CD8-positive, alpha-beta T cell (primary cell): ENCODE measurements at regions of chr1 and their contacts with region 1.

Region 1: DNA sequence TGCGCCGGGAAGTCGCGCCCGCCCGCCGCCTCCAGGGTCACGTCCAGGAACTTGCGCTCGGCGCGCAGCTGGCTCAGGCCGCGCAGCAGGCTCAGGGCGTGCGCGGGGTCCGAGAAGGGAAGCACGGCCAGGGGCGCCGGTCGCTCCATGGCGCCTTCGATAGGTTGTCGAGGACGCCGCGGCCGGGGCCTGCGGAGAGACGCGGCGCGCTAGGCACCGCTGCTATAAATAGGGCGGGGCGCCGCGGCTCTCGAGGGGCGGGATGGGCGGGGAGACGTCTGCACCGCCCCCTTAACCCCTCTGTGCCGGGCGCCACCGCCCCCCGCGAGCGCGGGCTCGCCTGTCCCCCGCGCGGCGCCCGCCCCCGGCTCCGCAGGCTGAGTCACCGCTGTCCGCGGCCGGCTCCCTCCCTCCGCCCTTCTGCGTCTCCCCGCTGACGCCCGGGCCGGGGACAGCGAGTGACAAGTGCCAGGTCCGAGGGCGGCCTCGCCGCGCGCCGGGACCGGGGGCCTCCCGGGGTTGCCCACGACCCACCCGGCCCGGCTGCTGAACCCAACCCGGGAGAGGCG is at the start of gene KLHL21:
- DNase-seq: peak; percentile 68 to 94 (median 85)
- ATAC-seq: peak; percentile 56
- H3K4me3 ChIP-seq: peak within 1 kb of the TSS; percentile 87 to 89
- H3K4me3 Mint-ChIP-seq: peak within 1 kb of the TSS; percentile 97
- H3K27ac ChIP-seq: peak within 1 kb of the TSS; percentile 91 to 96
- H3K27ac Mint-ChIP-seq: peak within 1 kb of the TSS; percentile 97
- H3K4me1 ChIP-seq: peaks cover 34% of the 10 kb centered on the region
- H3K4me1 Mint-ChIP-seq: peaks cover 34% of the 10 kb centered on the region
- H3K27me3 ChIP-seq: no peaks in the 10 kb centered on the region
- H3K27me3 Mint-ChIP-seq: no peaks in the 10 kb centered on the region
- CTCF ChIP-seq: no peak
- total RNA-seq, gene KLHL21: 33.3 to 33.4 TPM

Region 2: GRCh38 chr1:5992026-5992813 is 610.5 kb before region 1 on chr1 and contains the start of gene NPHP4:
- CTCF ChIA-PET with region 1: no interaction called
- POLR2A ChIA-PET with region 1: no interaction called
- intact Hi-C with region 1: loop called in 1 of 2 experiments (anchors 5 kb)
- DNase-seq: peak; percentile 98 to 100 (median 99)
- ATAC-seq: peak; percentile 86
- H3K4me3 ChIP-seq: peak within 1 kb of the TSS; percentile 64 to 87
- H3K4me3 Mint-ChIP-seq: peak within 1 kb of the TSS; percentile 96
- H3K27ac ChIP-seq: peak within 1 kb of the TSS; percentile 90 to 99
- H3K27ac Mint-ChIP-seq: peak within 1 kb of the TSS; percentile 93
- H3K4me1 ChIP-seq: peaks cover 35% of the 10 kb centered on the region
- H3K4me1 Mint-ChIP-seq: peaks cover 33% of the 10 kb centered on the region
- H3K27me3 ChIP-seq: no peaks in the 10 kb centered on the region
- H3K27me3 Mint-ChIP-seq: no peaks in the 10 kb centered on the region
- CTCF ChIP-seq: no peak
- total RNA-seq, gene NPHP4: 3.1 to 3.7 TPM

Region 3: DNA sequence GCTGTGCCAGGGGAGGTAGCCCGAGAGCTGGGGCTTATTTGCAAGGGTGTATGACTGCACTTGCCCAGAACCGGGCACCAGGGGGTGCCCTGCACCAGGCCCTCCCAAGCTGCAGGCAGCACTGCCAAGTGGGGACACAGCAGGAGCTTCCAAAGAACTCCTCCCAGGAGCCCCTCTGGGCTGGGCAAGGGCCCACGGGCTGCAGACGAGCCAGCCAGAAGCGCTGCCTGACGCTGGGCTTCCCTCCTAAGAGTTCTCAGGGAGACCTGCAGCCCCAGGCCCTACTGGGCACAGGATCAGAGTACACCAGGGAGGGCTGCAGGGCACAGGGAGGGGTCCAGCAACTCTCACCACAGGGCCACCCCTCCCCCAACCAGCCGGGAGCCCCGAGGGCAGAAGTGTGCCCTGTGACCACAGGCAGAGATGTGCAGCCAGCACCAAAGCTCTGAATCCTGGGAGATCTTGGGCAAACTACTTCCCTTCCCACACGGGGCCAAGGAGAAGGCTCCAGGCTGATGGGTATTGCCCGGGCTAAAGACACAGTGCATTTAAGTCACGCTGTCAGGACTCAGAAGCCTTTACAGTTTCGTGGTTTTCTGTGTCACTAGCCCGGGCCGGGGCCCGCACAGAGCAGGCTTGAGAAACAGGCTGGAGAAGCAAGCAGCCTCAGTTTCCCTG is 493.7 kb before region 1 on chr1:
- CTCF ChIA-PET with region 1: no interaction called
- POLR2A ChIA-PET with region 1: no interaction called
- intact Hi-C with region 1: no loop called
- DNase-seq: peak in 4 of 9 experiments; percentile 24 to 52 (median 33)
- ATAC-seq: peak; percentile 71
- H3K4me3 ChIP-seq: no peak overlapping the region
- H3K4me3 Mint-ChIP-seq: no peak overlapping the region
- H3K27ac ChIP-seq: no peak overlapping the region
- H3K27ac Mint-ChIP-seq: no peak overlapping the region
- H3K4me1 ChIP-seq: no peaks in the 10 kb centered on the region
- H3K4me1 Mint-ChIP-seq: no peaks in the 10 kb centered on the region
- H3K27me3 ChIP-seq: peaks cover 4 to 8% of the 10 kb centered on the region in 2 experiments
- H3K27me3 Mint-ChIP-seq: peaks cover 15% of the 10 kb centered on the region
- CTCF ChIP-seq: no peak

Region 4: DNA sequence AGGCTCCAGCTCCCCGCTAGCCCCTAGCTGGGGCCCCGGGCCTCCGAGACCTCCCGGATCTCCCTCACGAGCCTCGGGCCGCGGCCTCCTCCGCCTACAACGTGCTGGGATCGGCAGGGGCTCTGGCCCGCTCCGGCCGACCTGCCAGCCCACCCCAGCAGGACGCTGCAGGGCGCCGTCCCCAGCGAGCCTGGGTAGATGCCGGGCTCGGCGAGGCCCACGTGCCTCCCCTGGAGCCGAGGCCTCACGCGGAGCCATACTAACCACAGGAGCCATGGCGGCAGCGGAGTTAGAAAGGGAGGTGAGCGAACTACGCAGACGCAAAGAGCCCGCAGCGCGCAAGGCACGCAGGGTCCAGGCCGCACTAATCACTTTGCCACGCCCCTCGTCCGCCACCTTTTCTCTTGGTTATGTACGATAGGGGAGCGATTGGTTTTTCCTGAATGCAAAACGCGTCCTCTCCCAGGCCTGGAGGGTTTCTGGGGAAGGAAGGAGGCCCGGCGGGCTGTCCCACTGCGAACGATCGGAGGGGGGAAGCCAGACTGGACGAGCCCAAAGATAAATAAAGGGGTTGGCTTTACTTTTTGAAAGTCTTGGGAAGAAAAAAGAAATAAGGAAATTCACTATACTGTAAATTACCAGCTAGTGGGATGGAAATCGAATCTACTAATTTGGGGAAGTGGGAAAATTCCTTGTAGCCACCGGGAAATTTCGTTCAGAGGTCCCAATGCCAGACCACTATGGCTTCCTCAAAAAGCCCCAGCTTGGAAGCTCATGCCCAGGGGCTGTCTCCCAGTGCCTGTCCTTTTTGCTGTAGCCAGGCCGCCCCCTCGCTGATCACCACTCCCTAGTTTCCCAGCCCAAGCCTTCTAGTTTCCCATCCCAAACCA is 403.2 kb before region 1 on chr1 and contains the start of gene RPL22:
- CTCF ChIA-PET with region 1: no interaction called
- POLR2A ChIA-PET with region 1: no interaction called
- intact Hi-C with region 1: loop called in 1 of 2 experiments (anchors 5 kb)
- DNase-seq: peak; percentile 93 to 99 (median 97)
- ATAC-seq: peak; percentile 97
- H3K4me3 ChIP-seq: peak within 1 kb of the TSS; percentile 83 to 97
- H3K4me3 Mint-ChIP-seq: peak within 1 kb of the TSS; percentile 84
- H3K27ac ChIP-seq: peak within 1 kb of the TSS; percentile 68 to 82
- H3K27ac Mint-ChIP-seq: peak within 1 kb of the TSS; percentile 92
- H3K4me1 ChIP-seq: peaks cover 24% of the 10 kb centered on the region
- H3K4me1 Mint-ChIP-seq: peaks cover 42% of the 10 kb centered on the region
- H3K27me3 ChIP-seq: no peaks in the 10 kb centered on the region
- H3K27me3 Mint-ChIP-seq: no peaks in the 10 kb centered on the region
- CTCF ChIP-seq: no peak
- total RNA-seq, gene RPL22: 565 to 567 TPM

Region 5: GRCh38 chr1:6393400-6394187 is 209.2 kb before region 1 on chr1 and contains the start of gene ACOT7:
- CTCF ChIA-PET with region 1: no interaction called
- POLR2A ChIA-PET with region 1: interaction called, 3 read pairs
- intact Hi-C with region 1: loop called in 1 of 2 experiments (anchors 2 kb)
- DNase-seq: peak; percentile 79 to 94 (median 89)
- ATAC-seq: peak; percentile 93
- H3K4me3 ChIP-seq: peak within 1 kb of the TSS; percentile 33 to 62
- H3K4me3 Mint-ChIP-seq: peak within 1 kb of the TSS; percentile 88
- H3K27ac ChIP-seq: peak within 1 kb of the TSS; percentile 54 to 88
- H3K27ac Mint-ChIP-seq: peak within 1 kb of the TSS; percentile 90
- H3K4me1 ChIP-seq: peaks cover 15% of the 10 kb centered on the region
- H3K4me1 Mint-ChIP-seq: peaks cover 24% of the 10 kb centered on the region
- H3K27me3 ChIP-seq: no peaks in the 10 kb centered on the region
- H3K27me3 Mint-ChIP-seq: no peaks in the 10 kb centered on the region
- CTCF ChIP-seq: no peak
- total RNA-seq, gene ACOT7: 2.8 to 3.1 TPM

Region 6: DNA sequence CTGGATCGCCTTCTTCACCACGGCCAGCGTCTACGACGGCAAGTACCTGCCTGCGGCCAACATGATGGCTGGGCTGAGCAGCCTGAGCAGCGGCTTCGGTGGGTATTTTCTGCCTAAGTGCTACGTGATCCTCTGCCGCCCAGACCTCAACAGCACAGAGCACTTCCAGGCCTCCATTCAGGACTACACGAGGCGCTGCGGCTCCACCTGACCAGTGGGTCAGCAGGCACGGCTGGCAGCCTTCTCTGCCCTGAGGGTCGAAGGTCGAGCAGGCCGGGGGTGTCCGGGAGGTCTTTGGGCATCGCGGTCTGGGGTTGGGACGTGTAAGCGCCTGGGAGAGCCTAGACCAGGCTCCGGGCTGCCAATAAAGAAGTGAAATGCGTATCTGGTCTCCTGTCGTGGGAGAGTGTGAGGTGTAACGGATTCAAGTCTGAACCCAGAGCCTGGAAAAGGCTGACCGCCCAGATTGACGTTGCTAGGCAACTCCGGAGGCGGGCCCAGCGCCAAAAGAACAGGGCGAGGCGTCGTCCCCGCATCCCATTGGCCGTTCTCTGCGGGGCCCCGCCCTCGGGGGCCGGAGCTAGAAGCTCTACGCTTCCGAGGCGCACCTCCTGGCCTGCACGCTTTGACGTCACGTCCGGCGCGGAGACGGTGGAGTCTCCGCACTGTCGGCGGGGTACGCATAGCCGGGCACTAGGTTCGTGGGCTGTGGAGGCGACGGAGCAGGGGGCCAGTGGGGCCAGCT is 23.2 kb before region 1 on chr1 and contains the start of gene ZBTB48:
- CTCF ChIA-PET with region 1: interaction called, 4 read pairs
- POLR2A ChIA-PET with region 1: interaction called, 83 read pairs
- intact Hi-C with region 1: loop called (anchors 1 kb)
- DNase-seq: peak; percentile 91 to 98 (median 97)
- ATAC-seq: peak; percentile 98
- H3K4me3 ChIP-seq: peak within 1 kb of the TSS; percentile 90 to 97
- H3K4me3 Mint-ChIP-seq: peak within 1 kb of the TSS; percentile 97
- H3K27ac ChIP-seq: peak within 1 kb of the TSS; percentile 94
- H3K27ac Mint-ChIP-seq: peak within 1 kb of the TSS; percentile 98
- H3K4me1 ChIP-seq: peaks cover 31% of the 10 kb centered on the region
- H3K4me1 Mint-ChIP-seq: peaks cover 38% of the 10 kb centered on the region
- H3K27me3 ChIP-seq: no peaks in the 10 kb centered on the region
- H3K27me3 Mint-ChIP-seq: no peaks in the 10 kb centered on the region
- CTCF ChIP-seq: no peak
- total RNA-seq, gene ZBTB48: 31.9 to 35.0 TPM

Region 7: GRCh38 chr1:6624710-6625583 is 22.2 kb after region 1 on chr1 and contains the start of gene THAP3:
- CTCF ChIA-PET with region 1: interaction called, 10 read pairs
- POLR2A ChIA-PET with region 1: interaction called, 27 read pairs
- intact Hi-C with region 1: loop called (anchors 1 kb)
- DNase-seq: peak; percentile 78 to 94 (median 90)
- ATAC-seq: peak; percentile 99
- H3K4me3 ChIP-seq: peak within 1 kb of the TSS; percentile 61 to 69
- H3K4me3 Mint-ChIP-seq: peak within 1 kb of the TSS; percentile 91
- H3K27ac ChIP-seq: peak within 1 kb of the TSS; percentile 47 to 55
- H3K27ac Mint-ChIP-seq: peak within 1 kb of the TSS; percentile 88
- H3K4me1 ChIP-seq: peaks cover 18% of the 10 kb centered on the region
- H3K4me1 Mint-ChIP-seq: peaks cover 30% of the 10 kb centered on the region
- H3K27me3 ChIP-seq: no peaks in the 10 kb centered on the region
- H3K27me3 Mint-ChIP-seq: no peaks in the 10 kb centered on the region
- CTCF ChIP-seq: peak; percentile 25
- total RNA-seq, gene THAP3: 13.9 to 14.4 TPM

Region 8: GRCh38 chr1:6701437-6702153 is 98.8 kb after region 1 on chr1 and contains the start of gene DNAJC11:
- CTCF ChIA-PET with region 1: no interaction called
- POLR2A ChIA-PET with region 1: no interaction called
- intact Hi-C with region 1: loop called (anchors 5 kb)
- DNase-seq: peak; percentile 82 to 96 (median 89)
- ATAC-seq: peak; percentile 96
- H3K4me3 ChIP-seq: peak within 1 kb of the TSS; percentile 79 to 87
- H3K4me3 Mint-ChIP-seq: peak within 1 kb of the TSS; percentile 94
- H3K27ac ChIP-seq: peak within 1 kb of the TSS; percentile 68 to 70
- H3K27ac Mint-ChIP-seq: peak within 1 kb of the TSS; percentile 95
- H3K4me1 ChIP-seq: peaks cover 11% of the 10 kb centered on the region
- H3K4me1 Mint-ChIP-seq: peaks cover 25% of the 10 kb centered on the region
- H3K27me3 ChIP-seq: no peaks in the 10 kb centered on the region
- H3K27me3 Mint-ChIP-seq: no peaks in the 10 kb centered on the region
- CTCF ChIP-seq: peak; percentile 89
- total RNA-seq, gene DNAJC11: 23.3 to 24.4 TPM

Region 9: GRCh38 chr1:6889875-6890480 is 287.2 kb after region 1 on chr1:
- CTCF ChIA-PET with region 1: no interaction called
- POLR2A ChIA-PET with region 1: no interaction called
- intact Hi-C with region 1: no loop called
- DNase-seq: peak in 7 of 9 experiments; percentile 12 to 57 (median 37)
- ATAC-seq: no peak
- H3K4me3 ChIP-seq: no peak overlapping the region
- H3K4me3 Mint-ChIP-seq: no peak overlapping the region
- H3K27ac ChIP-seq: no peak overlapping the region
- H3K27ac Mint-ChIP-seq: no peak overlapping the region
- H3K4me1 ChIP-seq: no peaks in the 10 kb centered on the region
- H3K4me1 Mint-ChIP-seq: no peaks in the 10 kb centered on the region
- H3K27me3 ChIP-seq: no peaks in the 10 kb centered on the region
- H3K27me3 Mint-ChIP-seq: no peaks in the 10 kb centered on the region
- CTCF ChIP-seq: peak; percentile 43